Posterior cingulate gyrus (tissue), 11 donors: ENCODE measurements at regions of chr4 and their contacts with region 1.

Region 1: GRCh38 chr4:96352051-96352517 is 512.2 kb downstream of the PDHA2 start:
- DNase-seq: peak in 1 of 10 donors; percentile 22

Region 2: GRCh38 chr4:95155759-95156451 is 1196.2 kb before region 1 on chr4:
- intact Hi-C with region 1: loop called (anchors 2 kb)
- DNase-seq: no peak

Region 3: GRCh38 chr4:95979961-95980876 is 371.9 kb before region 1 on chr4:
- intact Hi-C with region 1: no loop called
- DNase-seq: peak in 2 of 10 donors; percentile 62 to 72

Region 4: GRCh38 chr4:96102541-96103026 is 249.5 kb before region 1 on chr4:
- intact Hi-C with region 1: no loop called
- DNase-seq: no peak

Region 5: GRCh38 chr4:96305030-96305429 is 47.1 kb before region 1 on chr4:
- intact Hi-C with region 1: no loop called
- DNase-seq: no peak